ENCODE measurements at regions of chr10 and their contacts with region 1.

Region 1: GRCh38 chr10:97210543-97210961 is 24.8 kb upstream of the SLIT1 start:
- DNase-seq: peak; percentile 80
- ATAC-seq: peak; percentile 51
- H3K4me3 ChIP-seq: no peak overlapping the region
- H3K4me3 Mint-ChIP-seq: no peak overlapping the region
- H3K27ac ChIP-seq: no peak overlapping the region
- H3K27ac Mint-ChIP-seq: no peak overlapping the region
- H3K4me1 ChIP-seq: no peaks in the 10 kb centered on the region
- H3K4me1 Mint-ChIP-seq: peaks cover 4% of the 10 kb centered on the region
- H3K27me3 ChIP-seq: peaks cover 0 to 9% (median 1%) of the 10 kb centered on the region in 4 experiments
- H3K27me3 Mint-ChIP-seq: no peaks in the 10 kb centered on the region
- CTCF ChIP-seq: peak; percentile 99

Region 2: GRCh38 chr10:96374985-96375830 is 835.3 kb before region 1 on chr10:
- CTCF ChIA-PET with region 1: interaction called, 16 read pairs
- POLR2A ChIA-PET with region 1: no interaction called
- intact Hi-C with region 1: no loop called
- DNase-seq: peak; percentile 85
- ATAC-seq: peak; percentile 91
- H3K4me3 ChIP-seq: peak overlapping the region; percentile 8 to 63 (median 42)
- H3K4me3 Mint-ChIP-seq: peak overlapping the region; percentile 86
- H3K27ac ChIP-seq: no peak overlapping the region
- H3K27ac Mint-ChIP-seq: no peak overlapping the region
- H3K4me1 ChIP-seq: peaks cover 6 to 13% of the 10 kb centered on the region in 2 donors
- H3K4me1 Mint-ChIP-seq: peaks cover 15% of the 10 kb centered on the region
- H3K27me3 ChIP-seq: peaks cover 0 to 8% (median 0%) of the 10 kb centered on the region in 4 experiments
- H3K27me3 Mint-ChIP-seq: peaks cover 32% of the 10 kb centered on the region
- CTCF ChIP-seq: peak; percentile 99

Region 3: GRCh38 chr10:96930469-96930868 is 280.1 kb before region 1 on chr10:
- CTCF ChIA-PET with region 1: no interaction called
- POLR2A ChIA-PET with region 1: no interaction called
- intact Hi-C with region 1: no loop called
- DNase-seq: no peak
- ATAC-seq: no peak
- H3K4me3 ChIP-seq: no peak overlapping the region
- H3K4me3 Mint-ChIP-seq: no peak overlapping the region
- H3K27ac ChIP-seq: peak overlapping the region in 1 of 2 donors; percentile 63
- H3K27ac Mint-ChIP-seq: no peak overlapping the region
- H3K4me1 ChIP-seq: peaks cover 0 to 5% of the 10 kb centered on the region in 2 donors
- H3K4me1 Mint-ChIP-seq: peaks cover 18% of the 10 kb centered on the region
- H3K27me3 ChIP-seq: no peaks in the 10 kb centered on the region
- H3K27me3 Mint-ChIP-seq: no peaks in the 10 kb centered on the region
- CTCF ChIP-seq: no peak

Region 4: DNA sequence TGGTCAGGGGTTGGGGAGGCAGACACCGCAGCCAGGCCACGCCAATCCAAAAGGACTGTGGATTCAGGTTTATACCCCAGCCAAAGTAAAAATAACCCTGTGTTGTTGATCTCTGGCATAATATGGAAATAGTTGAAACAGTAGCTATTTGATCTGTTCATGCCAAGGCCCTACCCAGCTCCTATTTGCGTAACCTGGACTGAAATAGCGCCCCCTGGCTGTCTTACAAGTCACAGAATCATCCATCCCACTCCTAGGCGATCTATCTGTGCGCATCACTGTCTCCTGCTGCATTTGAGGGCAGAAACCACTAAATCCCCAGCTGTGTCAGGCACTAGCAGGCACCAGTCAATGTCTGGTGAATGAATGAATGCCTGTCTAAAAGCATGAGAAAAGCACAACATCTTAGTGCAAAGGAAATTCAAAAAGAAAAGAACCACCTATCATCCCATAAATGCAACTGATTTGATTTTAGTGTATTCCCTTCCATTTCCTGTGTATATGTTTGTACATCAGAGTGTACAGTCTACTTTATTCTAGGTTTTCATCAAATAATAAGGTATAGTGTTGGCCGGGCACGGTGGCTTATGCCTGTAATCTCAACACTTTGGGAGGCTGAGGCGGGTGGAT is 184.8 kb before region 1 on chr10:
- CTCF ChIA-PET with region 1: interaction called, 10 read pairs
- POLR2A ChIA-PET with region 1: no interaction called
- intact Hi-C with region 1: no loop called
- DNase-seq: peak; percentile 67
- ATAC-seq: peak; percentile 57
- H3K4me3 ChIP-seq: no peak overlapping the region
- H3K4me3 Mint-ChIP-seq: no peak overlapping the region
- H3K27ac ChIP-seq: no peak overlapping the region
- H3K27ac Mint-ChIP-seq: no peak overlapping the region
- H3K4me1 ChIP-seq: peaks cover 0 to 4% of the 10 kb centered on the region in 2 donors
- H3K4me1 Mint-ChIP-seq: peaks cover 8% of the 10 kb centered on the region
- H3K27me3 ChIP-seq: no peaks in the 10 kb centered on the region
- H3K27me3 Mint-ChIP-seq: peaks cover 5% of the 10 kb centered on the region
- CTCF ChIP-seq: peak; percentile 77

Region 5: GRCh38 chr10:97072851-97073665 is 137.5 kb before region 1 on chr10:
- CTCF ChIA-PET with region 1: interaction called, 412 read pairs
- POLR2A ChIA-PET with region 1: no interaction called
- intact Hi-C with region 1: loop called (anchors 1 kb)
- DNase-seq: peak; percentile 78
- ATAC-seq: peak; percentile 74
- H3K4me3 ChIP-seq: no peak overlapping the region
- H3K4me3 Mint-ChIP-seq: no peak overlapping the region
- H3K27ac ChIP-seq: no peak overlapping the region
- H3K27ac Mint-ChIP-seq: no peak overlapping the region
- H3K4me1 ChIP-seq: no peaks in the 10 kb centered on the region
- H3K4me1 Mint-ChIP-seq: no peaks in the 10 kb centered on the region
- H3K27me3 ChIP-seq: peaks cover 0 to 28% (median 3%) of the 10 kb centered on the region in 4 experiments
- H3K27me3 Mint-ChIP-seq: peaks cover 40% of the 10 kb centered on the region
- CTCF ChIP-seq: peak; percentile 90

Region 6: DNA sequence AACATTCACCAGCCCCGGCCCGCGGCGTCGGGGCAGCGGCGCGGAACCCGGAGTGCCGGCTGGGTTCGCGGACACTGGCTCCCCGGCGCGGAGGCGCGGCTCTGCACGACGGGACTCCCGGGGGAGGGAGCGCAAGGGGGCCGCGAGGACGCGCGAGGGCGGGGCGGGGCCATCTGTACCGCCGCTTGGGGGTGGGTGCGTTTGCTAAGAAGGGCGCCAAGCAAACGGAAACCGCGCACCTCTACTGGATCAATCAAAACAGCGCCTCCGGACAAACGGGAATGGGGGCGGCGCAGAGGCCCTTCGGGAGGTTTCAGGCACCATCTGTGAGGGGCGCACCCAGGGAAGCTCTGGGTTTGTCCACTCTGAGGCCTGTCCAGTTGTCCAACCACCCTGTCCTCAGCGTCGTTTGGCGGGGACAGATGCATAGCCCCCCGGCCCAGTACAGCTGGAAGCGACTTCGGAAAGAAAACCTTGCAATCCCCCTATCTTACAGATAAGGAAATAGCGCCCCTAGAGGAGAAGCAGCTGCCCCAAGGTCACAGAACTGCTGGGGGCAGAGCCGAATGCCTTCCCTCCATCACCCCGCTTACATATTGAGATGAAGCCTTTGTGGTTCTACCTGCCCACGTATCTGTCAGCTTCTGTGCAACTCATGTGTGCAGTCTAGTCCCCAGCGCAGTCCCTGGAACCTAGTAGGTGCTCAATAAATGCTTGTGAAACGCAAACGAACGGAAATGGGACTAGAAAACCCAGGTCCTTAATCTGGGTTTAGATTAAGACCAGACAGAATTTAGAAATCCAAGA is 14.1 kb before region 1 on chr10:
- CTCF ChIA-PET with region 1: interaction called, 140 read pairs
- POLR2A ChIA-PET with region 1: no interaction called
- intact Hi-C with region 1: no loop called
- DNase-seq: peak; percentile 82
- ATAC-seq: peak; percentile 76
- H3K4me3 ChIP-seq: peak overlapping the region; percentile 25 to 73 (median 59)
- H3K4me3 Mint-ChIP-seq: peak overlapping the region; percentile 89
- H3K27ac ChIP-seq: no peak overlapping the region
- H3K27ac Mint-ChIP-seq: no peak overlapping the region
- H3K4me1 ChIP-seq: peaks cover 29 to 38% of the 10 kb centered on the region in 2 donors
- H3K4me1 Mint-ChIP-seq: peaks cover 30% of the 10 kb centered on the region
- H3K27me3 ChIP-seq: peaks cover 0 to 30% (median 4%) of the 10 kb centered on the region in 4 experiments
- H3K27me3 Mint-ChIP-seq: peaks cover 34% of the 10 kb centered on the region
- CTCF ChIP-seq: peak; percentile 88

Region 7: GRCh38 chr10:97234400-97234799 is 23.8 kb after region 1 on chr10:
- CTCF ChIA-PET with region 1: interaction called, 25 read pairs
- POLR2A ChIA-PET with region 1: no interaction called
- intact Hi-C with region 1: no loop called
- DNase-seq: peak; percentile 29
- ATAC-seq: no peak
- H3K4me3 ChIP-seq: no peak overlapping the region
- H3K4me3 Mint-ChIP-seq: no peak overlapping the region
- H3K27ac ChIP-seq: no peak overlapping the region
- H3K27ac Mint-ChIP-seq: no peak overlapping the region
- H3K4me1 ChIP-seq: peaks cover 0 to 4% of the 10 kb centered on the region in 2 donors
- H3K4me1 Mint-ChIP-seq: peaks cover 5% of the 10 kb centered on the region
- H3K27me3 ChIP-seq: no peaks in the 10 kb centered on the region
- H3K27me3 Mint-ChIP-seq: no peaks in the 10 kb centered on the region
- CTCF ChIP-seq: peak; percentile 67

Measured in B cell (primary cell).